ENCODE measurements at regions of chr3 and their contacts with region 1.

Region 1: GRCh38 chr3:120348981-120349818 is at the start of gene LRRC58:
- DNase-seq: peak; percentile 91
- H3K4me3 Mint-ChIP-seq: peak within 1 kb of the TSS; percentile 84
- H3K27ac Mint-ChIP-seq: peak within 1 kb of the TSS; percentile 85
- H3K4me1 Mint-ChIP-seq: peaks cover 44% of the 10 kb centered on the region
- H3K27me3 Mint-ChIP-seq: no peaks in the 10 kb centered on the region
- total RNA-seq, gene LRRC58: 16.2 to 16.9 TPM

Region 2: DNA sequence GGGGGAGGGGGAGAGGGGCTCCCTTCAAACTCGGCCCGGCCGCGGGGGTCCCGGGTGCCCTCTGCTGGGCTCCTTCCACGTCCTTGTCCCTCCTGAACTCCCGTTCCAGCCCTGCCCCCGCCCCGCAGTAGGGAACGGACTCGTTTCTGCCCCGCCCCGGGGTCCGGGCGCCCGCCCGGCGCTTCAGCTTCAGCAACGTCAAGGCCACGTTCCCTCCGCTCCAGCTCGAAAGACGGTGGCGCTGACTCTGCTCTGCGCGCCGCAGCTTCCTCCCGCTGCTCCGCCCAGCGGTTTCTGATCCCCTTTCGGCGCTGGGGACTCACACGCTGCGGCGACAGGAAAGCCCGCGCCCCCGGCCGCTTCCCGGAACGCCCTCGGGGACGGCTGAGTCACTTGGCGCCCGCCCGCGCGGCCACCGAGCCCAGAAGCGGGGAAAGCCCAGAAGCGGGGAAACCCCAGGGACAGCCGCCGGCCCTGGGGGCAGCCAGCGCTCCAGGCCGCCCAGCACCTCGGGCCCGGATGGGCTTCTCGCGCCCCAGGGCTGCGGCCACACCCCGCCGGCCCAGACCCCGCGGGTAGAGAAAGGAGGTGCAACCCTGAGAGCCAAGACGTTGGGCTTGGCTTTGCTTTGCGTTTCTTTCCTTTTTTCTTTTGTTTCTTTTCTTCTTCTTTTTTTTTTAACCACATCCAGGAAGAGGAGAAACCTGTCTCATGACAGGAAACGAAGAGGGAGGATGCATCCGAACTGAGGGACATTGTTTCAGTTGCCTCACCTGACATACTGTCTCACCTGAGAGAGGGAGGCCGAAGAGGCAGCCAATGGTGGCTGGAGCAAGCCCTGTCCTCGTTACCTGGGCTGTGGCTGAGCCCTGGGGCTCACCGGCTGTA is 1026.1 kb before region 1 on chr3:
- CTCF ChIA-PET with region 1: no interaction called
- POLR2A ChIA-PET with region 1: no interaction called
- intact Hi-C with region 1: loop called (anchors 10 kb)
- DNase-seq: peak; percentile 97
- H3K4me3 Mint-ChIP-seq: peak overlapping the region; percentile 82
- H3K27ac Mint-ChIP-seq: peak overlapping the region; percentile 95
- H3K4me1 Mint-ChIP-seq: peaks cover 41% of the 10 kb centered on the region
- H3K27me3 Mint-ChIP-seq: no peaks in the 10 kb centered on the region

Region 3: DNA sequence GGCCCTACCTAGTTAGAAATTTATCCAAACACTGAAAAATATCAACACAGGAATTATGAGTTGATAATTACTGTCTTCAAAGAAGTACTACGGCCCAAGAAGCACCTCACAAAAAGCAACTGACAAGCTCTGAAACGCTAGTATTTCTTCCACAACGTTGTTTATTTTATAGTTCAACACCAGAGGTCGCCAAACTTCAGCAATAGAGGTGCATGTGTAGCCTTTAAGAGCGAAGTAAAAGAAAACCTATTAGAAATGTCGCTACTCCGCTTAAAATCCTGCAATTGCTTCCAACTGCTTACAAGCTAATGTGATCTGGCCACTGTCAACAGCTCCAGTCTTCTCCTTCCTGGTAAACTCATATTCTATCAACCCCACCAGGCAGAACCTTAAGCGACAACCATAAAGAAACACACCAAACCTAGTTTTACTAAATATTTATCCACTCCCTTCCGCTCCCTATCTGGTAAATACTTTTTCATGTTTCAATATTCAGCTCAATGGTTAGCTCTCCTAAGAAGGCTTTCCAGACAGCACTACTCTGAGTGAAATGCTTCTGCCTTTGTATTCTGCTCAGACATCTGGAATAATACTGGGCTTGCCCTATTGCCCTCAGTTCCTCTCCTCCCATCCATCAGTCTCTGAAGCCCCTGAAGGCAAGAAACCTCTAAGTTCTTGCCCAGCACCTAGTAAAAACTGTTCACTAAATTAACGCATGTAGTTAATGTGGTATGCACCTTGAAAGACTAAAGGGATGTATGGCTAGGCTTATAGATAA is 457.1 kb before region 1 on chr3:
- CTCF ChIA-PET with region 1: interaction called, 6 read pairs
- POLR2A ChIA-PET with region 1: no interaction called
- intact Hi-C with region 1: loop called (anchors 5 kb)
- DNase-seq: peak; percentile 35
- H3K4me3 Mint-ChIP-seq: no peak overlapping the region
- H3K27ac Mint-ChIP-seq: no peak overlapping the region
- H3K4me1 Mint-ChIP-seq: peaks cover 13% of the 10 kb centered on the region
- H3K27me3 Mint-ChIP-seq: no peaks in the 10 kb centered on the region

Region 4: GRCh38 chr3:120338517-120338916 is 10.7 kb before region 1 on chr3:
- CTCF ChIA-PET with region 1: interaction called, 4 read pairs
- POLR2A ChIA-PET with region 1: interaction called, 3 read pairs
- intact Hi-C with region 1: loop called (anchors 1 kb)
- DNase-seq: peak; percentile 65
- H3K4me3 Mint-ChIP-seq: no peak overlapping the region
- H3K27ac Mint-ChIP-seq: no peak overlapping the region
- H3K4me1 Mint-ChIP-seq: peaks cover 39% of the 10 kb centered on the region
- H3K27me3 Mint-ChIP-seq: no peaks in the 10 kb centered on the region

Region 5: GRCh38 chr3:120558771-120559241 is 209.6 kb after region 1 on chr3:
- CTCF ChIA-PET with region 1: interaction called, 8 read pairs
- POLR2A ChIA-PET with region 1: interaction called, 3 read pairs
- intact Hi-C with region 1: loop called (anchors 1 kb)
- DNase-seq: peak; percentile 90
- H3K4me3 Mint-ChIP-seq: peak overlapping the region; percentile 73
- H3K27ac Mint-ChIP-seq: peak overlapping the region; percentile 30
- H3K4me1 Mint-ChIP-seq: peaks cover 15% of the 10 kb centered on the region
- H3K27me3 Mint-ChIP-seq: peaks cover 2% of the 10 kb centered on the region

Region 6: DNA sequence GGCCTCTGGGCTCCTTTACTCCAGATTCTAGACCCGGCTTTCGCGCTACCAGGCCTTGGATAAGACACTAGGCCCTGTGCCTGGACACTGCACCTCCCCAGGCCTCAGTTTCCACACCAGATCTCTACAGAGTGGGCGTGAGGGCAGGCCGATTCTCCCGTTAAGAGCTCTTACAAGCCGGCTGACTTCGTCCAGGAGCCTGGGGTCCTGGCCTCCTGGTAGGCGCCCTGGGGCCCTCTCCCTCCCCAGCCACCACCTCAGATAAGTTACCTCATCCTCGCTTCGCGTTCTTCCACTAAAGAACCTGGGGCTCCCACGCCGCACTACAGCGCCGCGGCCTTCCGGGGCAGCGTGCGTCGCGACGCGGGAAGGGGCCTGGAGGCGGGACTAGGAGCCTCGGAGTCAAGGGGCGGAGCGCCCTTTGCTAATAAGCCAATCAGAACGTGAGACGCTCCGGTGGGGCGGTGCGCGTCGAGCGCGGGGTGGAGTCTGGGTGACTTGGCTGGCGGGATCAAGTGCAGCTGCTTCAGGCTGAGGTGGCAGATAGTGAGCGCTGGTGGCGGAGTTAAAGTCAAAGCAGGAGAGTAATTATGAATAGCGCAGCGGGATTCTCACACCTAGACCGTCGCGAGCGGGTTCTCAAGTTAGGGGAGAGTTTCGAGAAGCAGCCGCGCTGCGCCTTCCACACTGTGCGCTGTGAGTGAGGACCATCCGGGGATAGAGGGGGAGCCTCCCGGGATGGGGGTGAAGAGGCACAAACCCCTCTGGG is 1485.7 kb after region 1 on chr3 and contains the starts of genes EAF2 and IQCB1:
- CTCF ChIA-PET with region 1: no interaction called
- POLR2A ChIA-PET with region 1: no interaction called
- intact Hi-C with region 1: loop called (anchors 5 kb)
- DNase-seq: peak; percentile 98
- H3K4me3 Mint-ChIP-seq: peak within 1 kb of the TSS; percentile 98
- H3K27ac Mint-ChIP-seq: peak within 1 kb of the TSS; percentile 84
- H3K4me1 Mint-ChIP-seq: peaks cover 37% of the 10 kb centered on the region
- H3K27me3 Mint-ChIP-seq: no peaks in the 10 kb centered on the region
- total RNA-seq, gene EAF2: 14.4 to 14.8 TPM
- total RNA-seq, gene IQCB1: 36.8 to 37.3 TPM

Measured in activated CD4-positive, alpha-beta memory T cell treated with anti-CD3 and anti-CD28 coated beads for 36 hours (primary cell).